ENCODE measurements at regions of chr2 and their contacts with region 1.

Region 1: GRCh38 chr2:137659612-137660011 is 304.7 kb upstream of the HNMT start:
- DNase-seq: no peak
- ATAC-seq: no peak

Region 2: DNA sequence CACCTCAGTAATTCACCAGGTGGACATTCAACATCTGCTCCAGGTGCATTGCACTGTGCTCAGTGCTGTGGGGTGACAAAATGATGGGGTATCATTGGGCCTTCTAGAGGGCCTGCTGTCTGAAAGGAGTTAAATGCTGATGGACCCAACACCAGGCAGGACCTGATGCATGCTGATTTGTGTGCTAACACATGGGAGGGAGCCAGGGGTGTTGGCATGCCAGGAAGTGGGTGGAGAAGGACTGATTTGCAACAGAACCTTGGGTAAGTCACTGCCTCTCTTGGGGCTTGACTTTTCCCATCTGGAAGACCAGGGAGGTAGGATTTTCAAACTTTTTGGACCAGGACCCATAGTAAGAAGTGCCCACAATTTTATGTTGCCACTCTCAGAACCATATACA is 1483.7 kb before region 1 on chr2:
- intact Hi-C with region 1: no loop called
- DNase-seq: no peak
- ATAC-seq: no peak

Region 3: DNA sequence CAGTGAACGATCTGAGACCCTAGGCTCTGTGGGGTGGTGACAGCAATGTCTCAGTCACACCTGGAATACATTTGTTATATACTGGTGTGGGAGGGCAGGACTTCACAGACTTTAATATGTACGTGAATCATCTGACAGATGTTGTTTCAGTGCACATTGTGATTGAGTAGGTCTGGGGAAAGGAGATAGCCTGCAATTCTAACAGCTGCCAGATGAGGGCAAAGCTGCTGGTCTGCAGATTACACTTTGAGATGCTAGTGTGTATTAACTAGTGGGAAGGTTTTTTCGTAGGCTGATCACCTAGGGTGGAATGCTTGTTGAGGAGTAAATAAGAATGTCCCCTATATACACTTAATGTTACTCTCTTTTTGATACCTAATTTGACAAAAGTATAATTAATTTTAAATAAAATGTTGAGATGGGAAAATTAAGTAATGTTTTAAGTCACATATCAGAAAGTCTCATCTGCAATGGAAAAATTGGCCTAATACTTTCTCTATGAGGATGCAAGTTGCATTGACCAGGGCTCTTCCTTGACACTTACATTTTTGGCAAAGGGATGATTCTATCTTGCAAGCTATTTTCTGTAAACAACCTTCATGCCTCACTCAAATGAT is 192.3 kb before region 1 on chr2:
- intact Hi-C with region 1: loop called (anchors 5 kb)
- DNase-seq: no peak
- ATAC-seq: no peak

Measured in Right ventricle myocardium inferior (tissue), 1 donor.